HepG2 (cell line): ENCODE measurements at regions of chr20 and their contacts with region 1.

Region 1: GRCh38 chr20:34704177-34705007 is at the start of gene TP53INP2:
- DNase-seq: peak; percentile 94
- ATAC-seq: peak; percentile 70
- H3K4me3 ChIP-seq: peak within 1 kb of the TSS; percentile 82 to 98 (median 84)
- H3K27ac ChIP-seq: peak within 1 kb of the TSS; percentile 92
- H3K4me1 ChIP-seq: peaks cover 63% of the 10 kb centered on the region
- H3K27me3 ChIP-seq: no peaks in the 10 kb centered on the region; a peak in 1 of 5 replicates
- CTCF ChIP-seq: no peak
- EP300 ChIP-seq: peak; percentile 22 to 44; a peak in 3 of 4 replicates
- POLR2A ChIP-seq: peak; percentile 66 to 92
- RAD21 ChIP-seq: peak; percentile 39
- total RNA-seq, gene TP53INP2: 5.2 and 10.1 TPM in 2 replicates

Region 2: DNA sequence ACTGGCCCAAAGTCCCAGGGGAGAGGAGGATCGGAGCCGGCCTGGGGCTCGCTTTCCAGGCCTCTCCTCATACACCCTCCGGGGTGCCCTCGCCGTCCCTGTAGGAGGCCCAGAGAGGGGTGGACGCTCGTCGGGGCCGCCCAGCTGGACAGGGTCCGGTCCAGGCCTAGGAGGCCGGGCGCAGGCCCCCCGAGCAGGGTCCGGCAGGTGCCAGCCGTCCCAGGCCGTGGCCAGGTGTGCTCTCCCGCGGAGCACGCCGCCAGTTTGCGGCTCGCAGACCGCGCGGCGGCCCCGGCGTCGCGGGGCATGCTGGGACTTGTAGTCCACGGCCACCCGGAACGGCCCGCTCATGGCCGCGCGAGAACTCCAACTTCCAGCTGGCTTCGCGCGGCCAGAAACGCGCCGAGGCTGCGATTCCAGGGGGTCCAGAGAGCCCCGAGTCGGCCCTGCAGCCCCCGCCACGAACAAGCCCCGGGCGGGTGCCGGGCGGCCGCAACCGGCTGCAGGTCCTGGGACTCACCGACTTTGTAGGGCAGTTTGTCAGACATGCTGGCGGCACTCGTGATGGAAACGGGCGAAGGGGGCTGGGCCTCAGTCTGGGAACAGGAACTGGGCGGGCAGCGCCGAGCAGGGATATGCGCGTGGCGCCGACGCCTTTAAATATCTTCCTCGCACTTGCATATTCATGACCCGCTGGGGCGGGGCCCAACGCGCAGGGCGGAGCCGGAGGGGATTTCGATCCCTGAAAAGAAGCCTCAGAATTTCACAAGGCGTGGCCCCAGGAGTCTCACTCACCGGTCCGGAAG is 401.5 kb before region 1 on chr20 and contains the start of gene AHCY:
- CTCF ChIA-PET with region 1: no interaction called
- POLR2A ChIA-PET with region 1: interaction called, 3 read pairs
- in situ Hi-C with region 1: loop called (anchors 10 kb)
- intact Hi-C with region 1: no loop called
- DNase-seq: peak; percentile 97
- ATAC-seq: peak; percentile 90
- H3K4me3 ChIP-seq: peak within 1 kb of the TSS; percentile 80 to 92 (median 90)
- H3K27ac ChIP-seq: peak within 1 kb of the TSS; percentile 83
- H3K4me1 ChIP-seq: peaks cover 71% of the 10 kb centered on the region
- H3K27me3 ChIP-seq: no peaks in the 10 kb centered on the region; a peak in 1 of 5 replicates
- CTCF ChIP-seq: no peak
- EP300 ChIP-seq: no peak; a peak in 1 of 4 replicates
- POLR2A ChIP-seq: peak; percentile 95 to 96
- RAD21 ChIP-seq: peak; percentile 67
- total RNA-seq, gene AHCY: 407 and 447 TPM in 2 replicates

Region 3: GRCh38 chr20:34621383-34622367 is 82.7 kb before region 1 on chr20:
- CTCF ChIA-PET with region 1: no interaction called
- POLR2A ChIA-PET with region 1: interaction called, 27 read pairs
- in situ Hi-C with region 1: no loop called
- intact Hi-C with region 1: loop called (anchors 5 kb)
- DNase-seq: peak; percentile 100
- ATAC-seq: peak; percentile 96
- H3K4me3 ChIP-seq: peak overlapping the region in 1 of 3 experiments; percentile 43; a peak in 2 of 6 replicates
- H3K27ac ChIP-seq: peak overlapping the region; percentile 89
- H3K4me1 ChIP-seq: peaks cover 65% of the 10 kb centered on the region
- H3K27me3 ChIP-seq: no peaks in the 10 kb centered on the region
- CTCF ChIP-seq: no peak; the same call in 1 of the 2 replicates
- EP300 ChIP-seq: peak; percentile 95 to 100
- POLR2A ChIP-seq: peak; percentile 22; a peak in 1 of 4 replicates
- RAD21 ChIP-seq: no peak; the same call in 1 of the 2 replicates

Region 4: GRCh38 chr20:34676642-34677373 is 27.6 kb before region 1 on chr20 and contains the start of gene PIGU:
- CTCF ChIA-PET with region 1: no interaction called
- POLR2A ChIA-PET with region 1: interaction called, 43 read pairs
- in situ Hi-C with region 1: no loop called
- intact Hi-C with region 1: loop called (anchors 1 kb)
- DNase-seq: peak; percentile 95
- ATAC-seq: peak; percentile 97
- H3K4me3 ChIP-seq: peak within 1 kb of the TSS; percentile 87 to 96 (median 89)
- H3K27ac ChIP-seq: peak within 1 kb of the TSS; percentile 86
- H3K4me1 ChIP-seq: peaks cover 29% of the 10 kb centered on the region
- H3K27me3 ChIP-seq: peaks cover 0 to 4% of the 10 kb centered on the region in 2 experiments; a peak in 1 of 5 replicates
- CTCF ChIP-seq: peak; percentile 59; the same call in 1 of the 2 replicates
- EP300 ChIP-seq: peak in 1 of 2 experiments; percentile 61; a peak in 1 of 4 replicates
- POLR2A ChIP-seq: peak; percentile 88 to 91
- RAD21 ChIP-seq: peak; percentile 61
- total RNA-seq, gene PIGU: 27.1 and 45.5 TPM in 2 replicates

Region 5: DNA sequence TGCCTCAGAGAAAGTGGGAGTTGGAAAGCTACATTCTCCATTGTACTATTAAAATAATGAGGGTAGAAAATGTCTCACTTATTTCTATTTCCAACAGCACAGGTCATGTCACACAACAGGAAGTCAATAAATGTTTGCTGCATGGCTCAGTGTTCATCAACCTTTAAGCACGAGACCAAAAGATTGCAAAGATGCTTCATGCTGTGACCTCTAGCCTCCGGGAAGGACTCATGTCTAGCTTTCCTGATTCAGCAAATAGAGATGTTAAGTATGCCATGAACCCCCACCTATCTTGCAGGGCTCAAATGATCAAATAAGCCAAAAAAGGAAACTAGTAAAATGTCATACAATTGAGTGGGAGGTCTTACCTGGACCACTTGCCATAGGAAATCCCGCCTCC is 63.7 kb after region 1 on chr20:
- CTCF ChIA-PET with region 1: interaction called, 3 read pairs
- POLR2A ChIA-PET with region 1: interaction called, 3 read pairs
- in situ Hi-C with region 1: no loop called
- intact Hi-C with region 1: loop called (anchors 10 kb)
- DNase-seq: no peak
- ATAC-seq: no peak
- H3K4me3 ChIP-seq: no peak overlapping the region
- H3K27ac ChIP-seq: no peak overlapping the region
- H3K4me1 ChIP-seq: no peaks in the 10 kb centered on the region
- H3K27me3 ChIP-seq: no peaks in the 10 kb centered on the region
- CTCF ChIP-seq: no peak
- EP300 ChIP-seq: no peak
- POLR2A ChIP-seq: no peak
- RAD21 ChIP-seq: no peak

Region 6: DNA sequence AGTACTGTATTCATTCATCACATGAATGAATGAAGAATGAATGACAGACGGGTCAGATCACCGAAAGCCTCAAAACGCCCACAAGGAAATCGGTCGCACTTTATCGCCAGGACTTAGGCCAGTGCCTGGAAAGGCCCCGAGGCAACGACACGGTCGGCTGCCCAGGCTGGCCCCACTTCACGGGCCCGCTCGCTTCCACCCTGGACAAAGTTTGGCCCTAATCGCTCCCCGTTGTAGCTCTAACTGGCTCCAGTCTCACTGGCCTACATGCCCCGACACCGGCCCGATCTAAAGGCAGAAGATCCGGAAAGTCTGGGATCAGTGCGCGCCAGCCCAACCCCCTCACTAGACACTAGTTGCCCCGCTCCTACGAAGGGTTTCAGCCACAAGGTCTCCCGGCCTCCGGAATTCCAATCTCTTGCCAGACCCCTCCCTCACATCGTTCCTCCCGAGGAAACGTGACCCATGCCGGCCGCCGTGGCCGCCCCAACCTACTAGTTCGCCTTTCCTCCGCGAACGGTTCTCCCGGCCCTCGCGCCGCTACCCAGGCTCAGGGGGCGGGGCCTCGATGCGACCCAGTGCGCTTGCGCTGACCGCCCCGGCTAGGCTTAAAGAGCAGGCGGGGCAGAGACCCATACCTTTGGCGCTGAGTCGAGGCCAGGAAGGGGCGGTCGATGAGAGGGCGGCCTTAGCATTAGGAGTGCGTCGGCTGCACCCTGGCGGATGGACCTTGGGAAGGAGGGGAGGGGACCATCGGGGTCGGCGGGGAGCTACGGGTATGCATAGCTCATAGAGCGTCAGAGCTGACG is 251.0 kb after region 1 on chr20 and contains the starts of genes GSS and MYH7B:
- CTCF ChIA-PET with region 1: no interaction called
- POLR2A ChIA-PET with region 1: no interaction called
- in situ Hi-C with region 1: no loop called
- intact Hi-C with region 1: no loop called
- DNase-seq: peak; percentile 98
- ATAC-seq: peak; percentile 94
- H3K4me3 ChIP-seq: peak within 1 kb of the TSS; percentile 74 to 83 (median 82)
- H3K27ac ChIP-seq: peak within 1 kb of the TSS; percentile 72
- H3K4me1 ChIP-seq: peaks cover 41% of the 10 kb centered on the region
- H3K27me3 ChIP-seq: peaks cover 0 to 10% of the 10 kb centered on the region in 2 experiments; a peak in 2 of 5 replicates
- CTCF ChIP-seq: peak; percentile 99
- EP300 ChIP-seq: peak in 1 of 2 experiments; percentile 20; a peak in 1 of 4 replicates
- POLR2A ChIP-seq: peak; percentile 89 to 98
- RAD21 ChIP-seq: peak; percentile 75
- total RNA-seq, gene GSS: 102 and 107 TPM in 2 replicates
- total RNA-seq, gene MYH7B: 0.18 and 0.20 TPM in 2 replicates